Right ventricle myocardium superior (tissue), 1 donor: ENCODE measurements at regions of chr1 and their contacts with region 1.

Region 1: GRCh38 chr1:40951943-40952743 is 27.4 kb upstream of the CTPS1 start:
- DNase-seq: peak; percentile 79
- ATAC-seq: peak; percentile 88

Region 2: GRCh38 chr1:40612345-40612831 is 339.8 kb before region 1 on chr1:
- intact Hi-C with region 1: loop called (anchors 10 kb)
- DNase-seq: peak; percentile 53
- ATAC-seq: peak; percentile 93

Region 3: DNA sequence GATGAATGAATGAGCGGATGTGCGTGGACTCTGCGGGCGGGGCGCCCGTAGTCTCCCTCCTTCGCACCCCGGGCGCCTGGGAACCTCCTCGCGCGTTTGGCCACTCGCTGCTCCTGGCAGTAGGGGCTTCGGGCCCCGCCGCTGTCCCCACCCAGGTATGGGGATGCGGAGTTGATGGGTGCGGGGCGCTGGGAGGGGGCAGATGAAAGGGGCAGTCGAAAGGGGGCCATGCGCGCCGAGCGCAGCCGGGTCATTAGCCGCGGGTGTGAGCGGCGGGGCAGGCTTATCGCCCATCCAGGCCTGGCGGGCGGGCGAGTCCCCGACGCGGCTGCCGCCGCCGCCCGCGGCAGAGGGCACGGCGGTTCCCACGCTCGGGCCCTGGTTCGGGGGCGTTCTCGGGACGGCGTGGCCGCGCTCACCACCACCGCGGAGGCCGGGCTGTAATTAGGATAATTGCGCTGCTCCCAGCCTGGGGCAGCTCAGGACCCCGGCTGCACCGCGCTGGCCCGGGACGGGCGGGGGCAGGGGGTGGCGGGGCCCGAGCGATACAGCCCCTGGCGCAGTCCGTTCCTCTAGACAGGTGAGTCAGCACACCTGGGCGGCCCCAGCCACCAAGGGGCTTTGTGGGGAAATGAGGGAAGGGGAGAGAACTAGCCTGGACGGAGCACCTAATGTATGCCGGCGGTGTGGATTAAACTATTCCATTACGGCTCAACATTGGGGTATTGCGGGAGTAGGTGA is 67.9 kb before region 1 on chr1:
- intact Hi-C with region 1: no loop called
- DNase-seq: no peak
- ATAC-seq: peak; percentile 41